Motor neuron (in vitro differentiated cells): ENCODE measurements at regions of chr6 and their contacts with region 1.

Region 1: DNA sequence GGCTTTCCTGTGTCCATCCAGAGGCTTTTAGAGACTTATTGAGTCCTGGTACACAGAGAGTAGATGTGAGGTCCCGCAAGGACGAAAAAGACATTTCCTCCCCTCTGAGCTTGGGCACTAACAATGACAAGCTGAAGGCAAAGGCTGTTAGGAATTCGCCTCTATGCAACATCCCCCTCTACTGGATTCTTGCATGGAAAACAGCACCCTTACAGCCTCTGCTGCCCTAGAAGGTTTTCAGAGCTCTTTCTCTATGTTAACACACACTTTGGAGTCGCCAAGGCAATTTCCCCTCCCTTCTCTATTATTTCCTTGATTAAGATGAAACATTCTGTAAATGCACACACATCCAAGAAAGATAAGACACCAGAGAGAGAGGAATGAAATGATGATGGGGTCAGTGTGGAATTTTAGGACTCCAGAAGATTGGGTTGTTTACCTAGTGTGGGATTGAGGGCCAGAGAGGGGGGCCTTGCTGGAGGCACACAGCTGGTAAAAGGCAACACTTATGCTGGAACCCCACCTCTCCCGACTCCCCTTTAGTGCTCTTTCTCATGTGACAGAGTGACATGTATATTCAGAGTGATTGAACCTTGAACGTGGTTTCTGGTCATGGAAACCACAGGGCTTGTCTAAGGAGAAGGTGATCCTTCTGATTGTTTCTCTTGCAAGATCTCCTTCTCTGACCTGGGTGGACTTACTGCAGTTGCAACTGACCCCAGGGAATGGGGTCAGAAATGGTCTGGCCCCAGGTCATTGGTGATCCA is 300.7 kb downstream of the CLIC5 start:
- ATAC-seq: peak; percentile 99 to 100 (median 100)
- H3K4me3 ChIP-seq: no peak overlapping the region
- H3K27ac ChIP-seq: no peak overlapping the region
- H3K4me1 ChIP-seq: peaks cover 2 to 3% of the 10 kb centered on the region in 2 donors

Region 2: DNA sequence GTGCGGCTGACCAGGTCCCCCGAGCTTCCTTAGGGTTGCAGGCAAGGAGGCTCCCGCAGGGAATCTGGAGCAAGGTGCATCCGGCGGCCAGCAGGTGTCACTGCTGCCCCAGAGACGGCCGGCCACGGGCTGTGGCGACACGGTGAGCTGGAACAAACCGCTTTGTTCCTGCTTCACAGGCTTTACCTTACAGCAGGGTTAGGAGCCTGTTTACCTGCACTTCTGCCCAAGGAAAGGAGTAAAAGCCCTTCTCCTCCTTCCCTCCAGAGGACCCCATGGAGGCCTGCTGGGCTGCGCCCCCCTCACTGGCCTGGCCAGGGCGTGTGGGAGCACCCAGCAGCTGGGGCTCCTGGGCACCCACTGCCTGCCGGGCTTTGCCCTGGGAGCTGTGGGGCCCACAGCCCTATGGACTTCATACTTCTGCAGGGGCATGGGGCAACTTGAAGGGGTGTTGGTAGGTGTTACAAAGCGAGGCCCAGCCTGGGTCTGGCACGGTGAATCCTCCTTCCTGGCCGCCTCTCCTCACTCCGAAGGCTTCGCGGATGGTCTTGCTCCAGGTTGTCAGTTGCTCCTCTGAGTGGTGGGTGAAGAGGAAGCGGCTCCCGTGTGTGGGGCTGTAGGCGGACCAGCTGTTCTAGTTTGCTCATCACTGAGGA is 1239.0 kb before region 1 on chr6:
- in situ Hi-C with region 1: loop called in 3 of 9 experiments (anchors 10 to 25 kb)
- ATAC-seq: peak; percentile 96 to 99 (median 97)
- H3K4me3 ChIP-seq: no peak overlapping the region
- H3K27ac ChIP-seq: peak overlapping the region; percentile 44 to 82
- H3K4me1 ChIP-seq: peaks cover 9 to 15% of the 10 kb centered on the region in 2 donors

Region 3: GRCh38 chr6:44630125-44631028 is 1084.5 kb before region 1 on chr6:
- in situ Hi-C with region 1: loop called in 5 of 9 experiments (anchors 25 kb)
- ATAC-seq: peak; percentile 65 to 96 (median 85)
- H3K4me3 ChIP-seq: no peak overlapping the region
- H3K27ac ChIP-seq: no peak overlapping the region
- H3K4me1 ChIP-seq: peaks cover under 1 to 3% of the 10 kb centered on the region in 2 donors

Region 4: GRCh38 chr6:44655412-44656342 is 1059.2 kb before region 1 on chr6:
- in situ Hi-C with region 1: loop called in 2 of 9 experiments (anchors 25 kb)
- ATAC-seq: peak; percentile 74 to 96 (median 84)
- H3K4me3 ChIP-seq: no peak overlapping the region
- H3K27ac ChIP-seq: no peak overlapping the region
- H3K4me1 ChIP-seq: peaks cover 0 to 13% of the 10 kb centered on the region in 2 donors

Region 5: GRCh38 chr6:45377554-45378333 is 337.2 kb before region 1 on chr6 and contains the start of gene SUPT3H:
- in situ Hi-C with region 1: loop called in 1 of 9 experiments (anchors 25 kb)
- ATAC-seq: peak; percentile 88 to 92 (median 90)
- H3K4me3 ChIP-seq: peak within 1 kb of the TSS; percentile 60 to 76 (median 70)
- H3K27ac ChIP-seq: peak within 1 kb of the TSS; percentile 95 to 97
- H3K4me1 ChIP-seq: peaks cover 6 to 12% of the 10 kb centered on the region in 2 donors
- total RNA-seq, gene SUPT3H: 8.7 to 43.2 (median 20.5) TPM

Region 6: GRCh38 chr6:45421709-45422502 is 293.0 kb before region 1 on chr6:
- in situ Hi-C with region 1: loop called in 3 of 9 experiments (anchors 25 kb)
- ATAC-seq: peak; percentile 68 to 82 (median 81)
- H3K4me3 ChIP-seq: peak overlapping the region; percentile 37 to 59 (median 48)
- H3K27ac ChIP-seq: no peak overlapping the region
- H3K4me1 ChIP-seq: peaks cover 18 to 23% of the 10 kb centered on the region in 2 donors

Region 7: GRCh38 chr6:45864651-45865050 is 149.7 kb after region 1 on chr6:
- in situ Hi-C with region 1: no loop called
- ATAC-seq: no peak
- H3K4me3 ChIP-seq: no peak overlapping the region
- H3K27ac ChIP-seq: no peak overlapping the region
- H3K4me1 ChIP-seq: no peaks in the 10 kb centered on the region

Region 8: GRCh38 chr6:45946352-45946751 is 231.4 kb after region 1 on chr6:
- in situ Hi-C with region 1: no loop called
- ATAC-seq: peak in 4 of 8 experiments; percentile 23 to 98 (median 96)
- H3K4me3 ChIP-seq: no peak overlapping the region
- H3K27ac ChIP-seq: no peak overlapping the region
- H3K4me1 ChIP-seq: no peaks in the 10 kb centered on the region

Region 9: GRCh38 chr6:46053039-46053933 is 338.4 kb after region 1 on chr6:
- in situ Hi-C with region 1: no loop called
- ATAC-seq: peak in 3 of 8 experiments; percentile 27 to 55 (median 30)
- H3K4me3 ChIP-seq: no peak overlapping the region
- H3K27ac ChIP-seq: no peak overlapping the region
- H3K4me1 ChIP-seq: no peaks in the 10 kb centered on the region